Mammary epithelial cell (primary cell): ENCODE measurements at regions of chr7 and their contacts with region 1.

Region 1: DNA sequence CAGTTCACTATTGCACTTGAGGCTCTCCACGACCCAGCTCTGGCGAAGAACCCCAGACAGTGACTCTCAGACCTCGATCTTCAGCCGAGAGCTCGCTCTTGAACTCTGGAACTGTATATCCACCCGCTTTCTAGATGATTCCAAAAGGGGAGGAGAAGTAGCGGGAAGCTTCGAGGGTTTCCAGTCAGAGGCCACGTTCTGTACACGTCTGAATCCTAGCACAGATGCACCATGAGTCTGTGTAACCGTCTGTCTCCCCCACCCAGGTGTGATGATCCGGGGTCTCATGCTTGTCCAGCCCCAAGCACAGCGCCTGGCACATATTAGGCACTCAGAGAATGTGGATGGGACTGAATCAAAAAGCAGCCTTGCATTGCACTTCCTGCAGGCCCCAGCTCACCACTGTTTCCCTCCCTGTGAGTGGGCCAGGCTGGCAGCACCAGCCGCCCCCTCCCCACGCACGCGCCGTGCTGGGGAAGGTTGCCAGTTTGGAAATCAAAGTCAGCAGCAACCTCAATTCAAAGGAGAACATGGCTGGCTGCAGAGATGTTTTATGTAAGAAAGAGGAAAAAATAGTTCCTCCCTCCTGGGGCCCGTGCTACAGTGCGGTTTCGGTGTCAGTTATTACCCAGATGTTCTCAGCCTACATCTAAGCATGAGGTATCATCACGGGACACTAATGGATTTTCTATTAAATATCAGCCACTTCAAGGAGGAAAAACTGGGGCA is 5.7 kb downstream of the GRID2IP start:
- DNase-seq: no peak
- H3K4me3 ChIP-seq: no peak overlapping the region
- H3K27ac ChIP-seq: no peak overlapping the region
- H3K4me1 ChIP-seq: no peaks in the 10 kb centered on the region
- H3K27me3 ChIP-seq: no peaks in the 10 kb centered on the region
- CTCF ChIP-seq: no peak

Region 2: DNA sequence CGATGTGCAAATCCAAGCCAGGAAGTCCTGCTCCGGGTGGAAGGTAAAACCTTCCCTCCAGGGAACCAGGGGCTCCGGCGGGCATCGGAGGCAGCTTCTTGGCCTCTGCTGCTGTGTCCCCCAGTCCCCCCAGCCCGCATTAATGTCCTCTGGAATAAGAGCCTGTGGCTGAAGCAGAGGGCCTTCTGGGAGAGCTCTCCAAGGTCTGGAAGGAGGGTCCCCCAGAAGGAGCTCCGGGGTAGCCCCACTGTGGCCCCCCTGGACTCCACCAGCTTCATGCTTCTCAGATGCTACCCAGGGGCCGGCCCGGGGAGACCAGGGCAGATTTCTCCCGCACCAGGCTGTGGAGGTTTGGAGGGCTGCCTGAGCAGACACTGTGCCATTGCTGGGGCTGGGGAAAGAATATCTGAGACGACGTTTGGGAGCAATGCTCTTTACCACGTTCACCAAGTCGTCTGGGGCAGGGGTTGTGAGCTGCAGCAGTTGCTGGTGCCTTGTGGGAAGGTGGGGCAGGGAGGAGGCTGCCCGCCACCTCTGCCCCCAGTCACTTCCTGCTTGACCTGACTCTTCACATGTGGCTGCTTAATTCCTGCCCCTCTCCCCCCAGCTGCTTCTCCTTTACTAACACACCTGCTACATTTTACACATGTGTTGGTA is 78.2 kb after region 1 on chr7:
- CTCF ChIA-PET with region 1: no interaction called
- dilution Hi-C with region 1: no loop called
- in situ Hi-C with region 1: no loop called
- intact Hi-C with region 1: no loop called
- DNase-seq: no peak
- H3K4me3 ChIP-seq: no peak overlapping the region
- H3K27ac ChIP-seq: no peak overlapping the region
- H3K4me1 ChIP-seq: peaks cover 9% of the 10 kb centered on the region
- H3K27me3 ChIP-seq: no peaks in the 10 kb centered on the region
- CTCF ChIP-seq: no peak

Region 3: GRCh38 chr7:6637544-6638229 is 92.1 kb after region 1 on chr7:
- CTCF ChIA-PET with region 1: no interaction called
- dilution Hi-C with region 1: loop called (anchors 10 kb)
- in situ Hi-C with region 1: no loop called
- intact Hi-C with region 1: no loop called
- DNase-seq: no peak
- H3K4me3 ChIP-seq: peak overlapping the region; percentile 75 to 83 (median 81)
- H3K27ac ChIP-seq: no peak overlapping the region
- H3K4me1 ChIP-seq: peaks cover 7% of the 10 kb centered on the region
- H3K27me3 ChIP-seq: no peaks in the 10 kb centered on the region
- CTCF ChIP-seq: peak in 1 of 2 donors; percentile 41

Region 4: DNA sequence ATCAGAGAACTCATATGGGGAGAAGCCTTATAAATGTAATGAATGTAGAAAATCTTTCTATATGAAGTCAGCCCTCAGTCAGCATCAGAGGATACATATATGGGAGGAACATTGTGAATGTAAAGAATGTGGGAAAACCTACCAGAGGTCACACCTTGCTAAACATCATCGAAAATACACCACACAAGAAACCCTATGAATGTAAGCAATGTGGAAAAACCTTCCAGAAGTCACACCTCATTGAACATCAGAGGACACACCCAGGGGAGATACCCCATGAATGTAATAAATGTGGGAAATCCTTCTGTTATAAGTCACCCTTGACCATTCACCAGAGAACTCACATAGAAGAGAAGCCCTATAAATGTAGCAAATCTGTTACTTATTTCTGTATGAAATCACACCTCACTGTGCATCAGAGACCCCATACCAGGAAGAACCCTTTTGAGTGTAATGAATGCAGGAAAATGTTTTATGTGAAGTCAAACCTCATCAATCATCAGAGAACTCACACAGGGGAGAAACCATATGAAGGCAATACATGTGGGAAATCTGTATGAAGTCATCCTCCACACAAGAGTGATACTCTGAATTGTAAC is 130.3 kb after region 1 on chr7:
- CTCF ChIA-PET with region 1: no interaction called
- dilution Hi-C with region 1: loop called (anchors 10 kb)
- in situ Hi-C with region 1: no loop called
- intact Hi-C with region 1: no loop called
- DNase-seq: no peak
- H3K4me3 ChIP-seq: no peak overlapping the region
- H3K27ac ChIP-seq: no peak overlapping the region
- H3K4me1 ChIP-seq: no peaks in the 10 kb centered on the region
- H3K27me3 ChIP-seq: no peaks in the 10 kb centered on the region
- CTCF ChIP-seq: no peak